HepG2 (cell line): ENCODE measurements at regions of chr17 and their contacts with region 1.

Region 1: GRCh38 chr17:44981221-44981968 is 13.3 kb upstream of the C1QL1 start:
- DNase-seq: peak; percentile 67
- ATAC-seq: peak; percentile 55
- H3K4me3 ChIP-seq: peak overlapping the region; percentile 5 to 25 (median 11); a peak in 4 of 6 replicates
- H3K27ac ChIP-seq: no peak overlapping the region
- H3K4me1 ChIP-seq: peaks cover 30% of the 10 kb centered on the region
- H3K27me3 ChIP-seq: peaks cover 10 to 46% of the 10 kb centered on the region in 2 experiments
- CTCF ChIP-seq: no peak
- EP300 ChIP-seq: peak in 1 of 2 experiments; percentile 49; a peak in 2 of 4 replicates
- POLR2A ChIP-seq: no peak
- RAD21 ChIP-seq: no peak

Region 2: GRCh38 chr17:44947461-44948314 is 33.7 kb before region 1 on chr17 and contains the start of gene KIF18B:
- CTCF ChIA-PET with region 1: no interaction called
- POLR2A ChIA-PET with region 1: no interaction called
- in situ Hi-C with region 1: no loop called
- intact Hi-C with region 1: loop called (anchors 1 kb)
- DNase-seq: peak; percentile 97
- ATAC-seq: peak; percentile 97
- H3K4me3 ChIP-seq: peak within 1 kb of the TSS; percentile 74 to 98 (median 89)
- H3K27ac ChIP-seq: peak within 1 kb of the TSS; percentile 71
- H3K4me1 ChIP-seq: peaks cover 49% of the 10 kb centered on the region
- H3K27me3 ChIP-seq: no peaks in the 10 kb centered on the region; a peak in 1 of 5 replicates
- CTCF ChIP-seq: peak; percentile 28; the same call in 1 of the 2 replicates
- EP300 ChIP-seq: 0 out of 4 replicates have a peak, but pooled peaks of 1 of the 2 experiments have one; percentile 17
- POLR2A ChIP-seq: peak; percentile 94 to 97
- RAD21 ChIP-seq: peak; percentile 43; the same call in 1 of the 2 replicates
- total RNA-seq, gene KIF18B: 14.5 and 15.3 TPM in 2 replicates

Region 3: GRCh38 chr17:44968226-44969143 is 12.9 kb before region 1 on chr17 and contains the start of gene C1QL1:
- CTCF ChIA-PET with region 1: no interaction called
- POLR2A ChIA-PET with region 1: interaction called, 10 read pairs
- in situ Hi-C with region 1: no loop called
- intact Hi-C with region 1: loop called (anchors 1 kb)
- DNase-seq: peak; percentile 84
- ATAC-seq: peak; percentile 89
- H3K4me3 ChIP-seq: peak within 1 kb of the TSS; percentile 56 to 83 (median 63)
- H3K27ac ChIP-seq: no peak within 1 kb of the TSS
- H3K4me1 ChIP-seq: peaks cover 36% of the 10 kb centered on the region
- H3K27me3 ChIP-seq: peaks cover 35 to 79% of the 10 kb centered on the region in 2 experiments
- CTCF ChIP-seq: peak; percentile 65
- EP300 ChIP-seq: 0 out of 4 replicates have a peak, but pooled peaks of 1 of the 2 experiments have one; percentile 18
- POLR2A ChIP-seq: no peak
- RAD21 ChIP-seq: 0 out of 2 replicates have a peak, but pooled peaks have one; percentile 15
- total RNA-seq, gene C1QL1: 0.11 TPM in 1 of 2 replicates, not detected in the other